ENCODE measurements at regions of chr4 and their contacts with region 1.

Region 1: DNA sequence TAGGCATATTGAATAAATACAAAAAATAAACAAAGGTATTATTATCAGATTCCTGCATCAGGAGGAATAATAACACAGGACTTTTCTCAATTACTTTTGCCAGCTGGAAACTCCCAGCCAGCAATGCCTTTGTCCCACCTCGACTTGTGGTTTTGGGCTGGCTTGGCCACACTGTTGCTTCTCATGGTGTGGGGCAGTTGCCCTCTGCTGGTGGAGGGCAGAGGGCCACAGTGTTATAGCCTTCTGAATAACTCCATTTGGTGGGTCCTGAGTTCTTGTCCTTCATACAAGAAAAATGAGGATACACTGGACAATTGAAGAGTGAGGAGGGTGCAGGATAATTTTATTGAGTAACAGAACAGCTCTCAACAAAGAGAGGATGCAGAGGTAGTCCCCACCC is 1206.0 kb upstream of the ADGRL3 start:
- DNase-seq: no peak
- H3K4me3 ChIP-seq: no peak overlapping the region
- H3K27ac ChIP-seq: no peak overlapping the region
- H3K4me1 ChIP-seq: no peaks in the 10 kb centered on the region
- H3K27me3 ChIP-seq: no peaks in the 10 kb centered on the region
- CTCF ChIP-seq: no peak
- POLR2A ChIP-seq: no peak

Region 2: DNA sequence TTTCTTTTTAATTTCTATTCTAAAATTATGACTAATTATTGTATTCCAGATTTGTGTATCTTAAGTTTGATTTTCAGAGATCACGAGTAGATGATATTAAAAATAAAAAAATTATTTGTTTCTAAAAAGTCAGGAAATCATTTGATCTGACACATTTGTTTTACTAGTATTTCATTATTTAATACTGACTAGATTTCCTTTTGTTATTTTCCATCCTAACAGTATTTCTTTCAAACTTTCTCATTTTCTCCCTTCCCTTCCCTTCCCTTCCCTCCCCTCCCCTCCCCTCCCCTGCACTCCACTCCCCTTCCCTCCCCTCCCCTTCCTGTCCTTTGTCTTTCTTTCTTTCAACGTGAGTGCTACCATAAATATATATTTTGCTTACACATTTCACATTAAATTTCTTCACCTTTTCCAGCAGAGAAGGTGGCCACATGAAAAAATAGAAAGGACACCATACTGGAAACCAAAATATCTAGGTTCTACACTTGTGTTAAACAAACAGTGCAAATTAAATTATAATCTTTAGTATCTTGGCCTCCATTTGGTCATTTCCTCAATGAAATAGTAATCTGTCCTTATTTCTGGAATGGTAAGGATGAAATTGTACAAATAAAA is 1471.2 kb before region 1 on chr4:
- intact Hi-C with region 1: loop called (anchors 10 kb)
- DNase-seq: no peak
- H3K4me3 ChIP-seq: no peak overlapping the region
- H3K27ac ChIP-seq: no peak overlapping the region
- H3K4me1 ChIP-seq: no peaks in the 10 kb centered on the region
- H3K27me3 ChIP-seq: no peaks in the 10 kb centered on the region
- CTCF ChIP-seq: no peak
- POLR2A ChIP-seq: no peak

Region 3: DNA sequence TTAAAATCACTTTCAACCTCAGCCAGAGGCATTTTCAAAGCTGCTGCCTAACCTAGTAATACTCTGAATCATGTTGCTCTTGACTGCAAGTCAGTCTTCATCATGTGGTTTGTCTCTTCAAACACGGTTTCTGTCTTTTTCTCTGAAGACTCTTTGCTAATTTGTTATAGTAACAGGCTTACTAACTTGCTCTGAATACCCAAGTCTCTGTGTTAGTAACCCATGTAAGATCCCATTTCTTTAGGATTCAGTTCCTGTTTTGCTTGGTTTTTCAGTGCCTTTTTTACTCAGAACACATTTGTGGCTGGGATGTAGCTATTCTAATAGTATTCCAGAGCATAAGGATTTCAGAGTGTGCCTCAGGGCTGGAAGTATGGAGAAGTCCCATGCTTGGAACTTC is 1433.4 kb before region 1 on chr4:
- intact Hi-C with region 1: no loop called
- DNase-seq: no peak
- H3K4me3 ChIP-seq: no peak overlapping the region
- H3K27ac ChIP-seq: no peak overlapping the region
- H3K4me1 ChIP-seq: no peaks in the 10 kb centered on the region
- H3K27me3 ChIP-seq: no peaks in the 10 kb centered on the region
- CTCF ChIP-seq: no peak
- POLR2A ChIP-seq: no peak